ENCODE measurements at regions of chr1 and their contacts with region 1.

Region 1: GRCh38 chr1:157984469-157984868 is 9.0 kb upstream of the KIRREL1 start:
- DNase-seq: no peak

Region 2: DNA sequence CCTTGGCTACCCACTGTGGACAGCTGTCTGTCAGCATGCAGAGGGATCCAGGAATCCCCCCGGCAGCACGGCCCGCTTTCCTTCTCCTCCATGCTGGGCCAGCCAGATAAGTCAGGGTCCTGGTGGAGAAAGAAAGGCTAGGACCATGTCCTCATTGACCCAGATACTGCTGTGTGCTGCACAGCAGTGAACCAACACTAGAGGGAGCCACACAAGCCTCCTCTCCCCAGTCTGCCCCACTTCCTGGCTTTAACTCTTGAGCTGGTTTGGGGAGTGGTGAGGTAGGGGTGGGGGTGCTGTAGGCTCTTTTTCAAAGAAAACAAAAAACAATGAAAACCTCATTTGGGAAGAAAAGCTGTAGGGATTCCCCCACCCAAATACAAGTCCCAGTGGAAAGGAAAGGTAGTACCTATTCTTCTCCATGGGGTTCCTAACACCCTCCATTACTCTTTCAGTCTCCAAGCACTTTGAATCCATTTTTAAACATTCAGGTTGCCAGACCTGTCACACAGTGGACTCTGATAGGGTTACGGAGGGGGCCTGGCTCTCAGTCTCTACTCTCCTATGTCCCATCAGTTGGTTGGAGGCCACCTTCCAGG is 111.4 kb after region 1 on chr1:
- in situ Hi-C with region 1: loop called (anchors 10 kb)
- DNase-seq: peak; percentile 57

Measured in KBM-7 (cell line).